ENCODE measurements at regions of chr5 and their contacts with region 1.

Region 1: DNA sequence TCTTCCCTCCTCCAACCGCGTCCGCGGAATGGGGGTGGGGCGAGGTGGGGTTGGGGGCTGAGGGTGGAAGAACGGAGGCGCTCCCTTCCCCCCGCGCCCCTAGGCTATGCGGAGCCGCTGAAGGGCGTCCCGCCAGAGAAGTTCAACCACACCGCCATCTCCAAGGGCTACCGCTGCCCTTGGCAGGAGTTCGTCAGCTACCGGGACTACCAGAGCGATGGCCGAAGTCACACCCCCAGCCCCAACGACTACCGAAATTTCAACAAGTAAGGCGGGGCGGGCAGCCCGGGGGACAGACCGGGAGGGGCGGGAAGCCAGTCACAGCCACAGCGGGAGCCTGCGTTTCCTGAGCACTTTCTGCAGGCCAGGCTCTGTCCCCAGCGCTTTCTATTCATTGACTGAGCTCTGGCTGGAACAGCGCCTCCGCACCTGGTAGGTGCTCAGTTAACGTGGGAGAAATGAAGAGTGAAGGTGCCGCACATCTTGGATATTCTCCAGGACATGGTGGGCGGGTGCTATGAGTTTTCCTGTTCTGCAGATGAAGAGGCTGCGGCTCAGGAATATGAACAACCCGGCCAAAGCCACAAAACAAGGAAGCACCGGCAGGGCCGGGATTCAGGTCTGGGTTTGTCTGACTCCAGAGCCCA is 11.3 kb downstream of the MYOZ3 start:
- DNase-seq: no peak

Region 2: GRCh38 chr5:150694612-150695011 is 22.3 kb after region 1 on chr5:
- intact Hi-C with region 1: loop called (anchors 2 kb)
- DNase-seq: no peak

Region 3: GRCh38 chr5:150789943-150790611 is 117.7 kb after region 1 on chr5:
- intact Hi-C with region 1: no loop called
- DNase-seq: no peak